K562 (cell line): ENCODE measurements at regions of chr2 and their contacts with region 1.

Region 1: DNA sequence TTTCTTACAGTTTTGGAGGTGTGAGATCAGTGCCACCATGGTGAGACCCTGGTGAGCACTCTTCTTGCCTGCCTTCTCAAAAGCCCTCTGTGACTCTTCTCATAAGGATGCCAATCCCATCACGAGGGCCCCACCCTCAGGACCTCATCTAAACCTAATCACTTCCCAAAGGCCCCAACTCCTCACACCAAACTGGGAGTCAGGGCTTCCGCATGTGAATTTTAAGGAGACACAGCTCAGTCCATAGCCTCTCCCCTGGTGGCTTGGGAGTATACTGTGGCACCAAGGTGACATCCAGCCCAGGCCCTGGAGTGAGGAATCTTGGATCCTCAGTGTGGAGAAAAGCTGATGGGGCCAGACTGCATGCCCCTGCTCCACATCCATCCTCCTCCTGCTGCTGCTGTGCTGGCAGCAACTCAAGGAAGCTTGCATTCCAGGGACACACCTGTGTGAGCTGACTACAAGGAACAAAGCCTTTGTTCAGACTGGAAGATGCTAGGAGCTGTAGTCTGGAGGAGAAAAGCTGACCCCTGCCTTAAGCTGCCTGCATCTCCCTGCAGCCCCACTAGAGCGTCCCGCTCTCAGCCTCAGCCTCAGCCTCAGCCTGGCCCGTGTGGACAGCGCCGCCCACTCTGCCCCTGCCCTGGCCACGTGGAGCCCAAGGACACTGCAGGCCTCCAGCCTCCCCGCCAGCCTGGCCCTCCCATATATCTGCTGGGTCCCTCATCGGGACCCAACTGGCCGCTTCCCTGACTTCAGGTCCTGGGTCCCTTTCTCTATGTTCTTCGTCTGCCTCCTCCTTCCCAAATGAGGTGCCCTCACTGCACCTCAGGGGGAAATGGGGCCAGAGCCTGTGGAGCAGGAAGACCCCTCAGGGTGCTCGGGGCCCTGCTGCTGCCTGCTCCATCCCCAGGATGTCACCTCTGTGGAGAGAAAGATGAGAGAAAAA is 87.8 kb upstream of the RAB6C start:
- DNase-seq: no peak
- ATAC-seq: peak; percentile 36; the same call in 1 of the 3 replicates
- H3K4me3 ChIP-seq: no peak overlapping the region
- H3K27ac ChIP-seq: no peak overlapping the region
- H3K4me1 ChIP-seq: no peaks in the 10 kb centered on the region
- H3K27me3 ChIP-seq: peaks cover 0 to 9% of the 10 kb centered on the region in 2 experiments; a peak in 2 of 5 replicates
- CTCF ChIP-seq: no peak
- EP300 ChIP-seq: no peak
- POLR2A ChIP-seq: no peak
- RAD21 ChIP-seq: no peak

Region 2: GRCh38 chr2:129812071-129812470 is 79.6 kb before region 1 on chr2:
- CTCF ChIA-PET with region 1: no interaction called
- POLR2A ChIA-PET with region 1: no interaction called
- in situ Hi-C with region 1: no loop called
- intact Hi-C with region 1: no loop called
- DNase-seq: no peak
- ATAC-seq: no peak
- H3K4me3 ChIP-seq: no peak overlapping the region
- H3K27ac ChIP-seq: no peak overlapping the region
- H3K4me1 ChIP-seq: no peaks in the 10 kb centered on the region
- H3K27me3 ChIP-seq: peaks cover 0 to 6% of the 10 kb centered on the region in 2 experiments; a peak in 3 of 5 replicates
- CTCF ChIP-seq: no peak
- EP300 ChIP-seq: no peak
- POLR2A ChIP-seq: no peak
- RAD21 ChIP-seq: no peak

Region 3: DNA sequence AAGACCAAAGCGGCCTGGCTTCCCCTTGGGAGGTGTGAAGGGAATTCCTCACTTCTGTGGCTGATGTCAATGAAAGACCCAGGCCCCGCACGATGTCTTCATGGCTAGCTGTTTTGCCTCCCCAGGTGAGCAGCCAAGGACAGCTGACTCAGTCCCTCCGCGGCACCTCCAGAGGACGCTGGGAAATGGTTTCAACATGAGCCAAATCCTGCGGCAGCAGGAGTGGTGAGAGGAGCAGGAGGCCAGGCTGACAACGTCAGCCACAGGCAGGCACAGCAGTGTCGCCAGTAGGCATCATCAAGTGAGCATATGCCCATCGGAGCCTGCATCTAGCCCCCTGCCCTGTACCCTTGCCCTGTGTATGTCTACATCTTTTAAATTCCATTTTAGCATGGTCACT is 68.6 kb before region 1 on chr2:
- CTCF ChIA-PET with region 1: no interaction called
- POLR2A ChIA-PET with region 1: no interaction called
- in situ Hi-C with region 1: no loop called
- intact Hi-C with region 1: loop called (anchors 2 kb)
- DNase-seq: no peak
- ATAC-seq: no peak
- H3K4me3 ChIP-seq: no peak overlapping the region
- H3K27ac ChIP-seq: no peak overlapping the region
- H3K4me1 ChIP-seq: peaks cover 0 to 2% of the 10 kb centered on the region in 2 experiments; a peak in 1 of 5 replicates
- H3K27me3 ChIP-seq: peaks cover 3 to 42% of the 10 kb centered on the region in 2 experiments; a peak in 3 of 5 replicates
- CTCF ChIP-seq: no peak
- EP300 ChIP-seq: no peak
- POLR2A ChIP-seq: no peak
- RAD21 ChIP-seq: no peak